Aorta (tissue), 5 donors: ENCODE measurements at regions of chr16 and their contacts with region 1.

Region 1: GRCh38 chr16:31458844-31459721 is at the start of gene ARMC5:
- DNase-seq: peak; percentile 99
- ATAC-seq: peak; percentile 94
- H3K4me3 ChIP-seq: peak within 1 kb of the TSS; percentile 51 to 52
- H3K27ac ChIP-seq: peak within 1 kb of the TSS; percentile 23 to 95
- H3K4me1 ChIP-seq: no peaks in the 10 kb centered on the region
- H3K27me3 ChIP-seq: no peaks in the 10 kb centered on the region
- total RNA-seq, gene ARMC5: 7.9 to 9.7 TPM

Region 2: DNA sequence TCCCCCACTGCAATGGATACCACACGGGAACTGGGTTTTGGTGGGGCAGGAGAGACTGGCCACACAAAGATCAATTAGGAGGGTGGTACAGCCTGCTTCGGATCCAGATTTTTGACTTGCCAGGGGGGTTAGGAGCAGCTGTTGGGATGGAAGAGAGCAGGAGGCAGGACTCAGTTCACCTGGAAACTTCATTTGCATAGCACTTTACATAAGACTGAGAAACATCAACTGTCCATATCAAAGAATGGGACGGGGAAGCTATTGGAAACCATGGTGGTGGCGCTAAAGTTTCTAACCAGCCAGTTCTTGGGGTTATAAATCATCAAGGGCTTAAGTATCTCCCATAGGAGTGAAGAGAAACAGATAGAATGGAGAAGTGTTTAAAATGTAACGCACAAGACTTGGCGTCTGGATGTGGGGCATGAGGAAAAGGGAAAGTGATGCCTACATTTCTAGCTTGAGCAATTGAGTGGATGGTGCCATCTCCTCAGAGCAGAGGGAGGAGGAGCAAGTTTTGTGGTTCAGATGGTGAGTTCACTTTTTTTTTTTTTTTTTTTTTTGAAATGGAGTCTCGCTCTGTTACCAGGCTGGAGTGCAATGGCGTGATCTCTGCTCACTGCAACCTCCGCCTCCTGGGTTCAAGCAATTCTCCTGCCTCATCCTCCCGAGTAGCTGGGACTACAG is 766.6 kb before region 1 on chr16:
- intact Hi-C with region 1: no loop called
- DNase-seq: no peak
- ATAC-seq: no peak
- H3K4me3 ChIP-seq: no peak overlapping the region
- H3K27ac ChIP-seq: no peak overlapping the region
- H3K4me1 ChIP-seq: no peaks in the 10 kb centered on the region
- H3K27me3 ChIP-seq: no peaks in the 10 kb centered on the region

Region 3: DNA sequence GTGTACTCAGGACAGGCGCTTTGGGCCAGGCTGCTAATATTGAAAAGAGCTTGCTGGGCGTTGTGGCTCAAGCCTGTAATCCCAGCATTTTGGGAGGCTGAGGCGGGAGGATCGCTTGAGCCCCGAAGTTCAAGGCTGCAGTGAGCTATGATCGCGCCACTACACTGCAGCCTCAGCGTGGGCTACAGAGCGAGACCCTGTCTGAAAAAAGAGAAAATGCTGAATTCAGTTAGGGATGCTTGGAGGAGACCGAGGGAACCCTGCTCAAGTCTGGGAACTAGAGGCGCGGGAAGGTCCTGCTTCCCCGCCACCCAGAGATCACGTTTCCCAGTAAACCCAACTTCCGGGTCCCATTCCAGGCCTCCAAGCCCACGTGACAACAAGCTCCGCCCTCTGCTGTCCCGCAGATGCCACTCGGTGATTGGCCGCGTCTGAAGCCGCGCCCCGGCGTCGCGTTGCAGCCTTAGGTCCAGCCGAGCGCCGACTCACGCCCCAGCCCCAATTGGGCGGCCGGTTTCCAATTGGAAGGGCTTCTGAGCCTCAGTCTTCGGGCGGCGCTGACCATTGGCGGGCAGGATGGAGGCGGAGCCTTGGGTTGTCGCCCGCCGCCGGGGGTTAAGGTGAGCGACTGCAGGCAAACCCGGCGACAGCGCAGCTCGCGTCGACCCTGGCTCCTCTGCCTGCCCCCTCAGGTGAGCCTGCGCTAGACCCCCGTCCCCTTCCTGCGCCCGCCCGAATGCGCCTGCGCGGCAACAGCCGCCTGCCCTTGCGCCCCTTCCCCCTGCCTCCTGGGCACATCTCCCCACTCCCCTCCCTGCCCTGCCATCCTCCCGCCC is 711.1 kb before region 1 on chr16 and contains the start of gene PHKG2:
- intact Hi-C with region 1: no loop called
- DNase-seq: peak; percentile 100
- ATAC-seq: peak; percentile 99
- H3K4me3 ChIP-seq: peak within 1 kb of the TSS; percentile 52 to 79
- H3K27ac ChIP-seq: peak within 1 kb of the TSS in 1 of 2 donors; percentile 84
- H3K4me1 ChIP-seq: no peaks in the 10 kb centered on the region
- H3K27me3 ChIP-seq: no peaks in the 10 kb centered on the region
- total RNA-seq, gene PHKG2: 15.8 to 20.8 TPM

Region 4: DNA sequence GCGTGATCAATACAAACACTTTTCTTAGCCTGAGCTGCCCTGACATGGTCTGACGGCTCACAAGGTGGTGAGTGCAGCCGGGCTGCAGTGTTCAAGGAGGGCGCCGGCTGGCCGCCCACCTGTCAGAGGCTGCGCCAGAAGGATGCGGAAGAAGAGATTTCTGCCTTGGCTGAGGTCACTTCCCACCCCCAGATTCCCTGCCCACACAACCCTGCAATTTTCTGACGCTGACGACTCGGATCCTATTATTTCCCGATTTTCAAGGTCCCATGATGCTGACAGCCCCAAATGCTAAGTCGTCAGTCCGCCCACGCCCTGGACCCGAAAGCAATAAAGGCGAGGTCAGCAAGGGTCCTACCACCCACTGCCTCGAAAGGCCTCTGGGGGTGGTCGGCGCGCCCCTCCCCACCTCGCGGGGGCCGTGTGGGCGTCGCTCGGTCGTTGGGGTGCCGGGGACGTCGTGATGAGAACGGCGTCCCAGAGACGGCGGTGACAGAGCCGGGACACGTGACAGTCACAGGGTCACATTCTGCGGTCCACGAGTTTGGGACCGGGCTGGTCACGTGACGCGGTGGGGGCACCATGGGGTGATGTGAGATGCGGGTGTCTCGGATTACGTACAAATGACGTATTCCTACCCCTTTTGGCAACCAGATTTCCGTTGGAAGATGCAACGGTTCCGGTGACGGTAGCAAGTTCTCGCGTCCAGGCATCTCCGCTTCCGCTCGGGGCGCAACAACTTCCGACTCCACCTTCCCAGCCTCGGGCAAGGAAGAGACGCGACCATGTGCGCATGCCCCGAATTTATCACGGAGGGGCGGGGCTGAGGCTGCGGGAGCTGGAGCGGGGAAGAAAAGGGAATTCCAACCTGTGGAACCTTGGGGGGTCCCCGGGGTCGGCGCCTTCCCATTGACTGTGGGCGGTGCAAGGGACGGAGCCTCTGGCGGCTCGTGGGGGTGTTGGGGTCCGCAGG is 426.1 kb before region 1 on chr16 and contains the start of gene STX4:
- intact Hi-C with region 1: loop called in 1 of 2 experiments (anchors 5 kb)
- DNase-seq: peak; percentile 99 to 100
- ATAC-seq: peak; percentile 96
- H3K4me3 ChIP-seq: peak within 1 kb of the TSS; percentile 76 to 89
- H3K27ac ChIP-seq: peak within 1 kb of the TSS; percentile 6 to 83
- H3K4me1 ChIP-seq: peaks cover 0 to 1% of the 10 kb centered on the region in 2 donors
- H3K27me3 ChIP-seq: no peaks in the 10 kb centered on the region
- total RNA-seq, gene STX4: 73.5 to 88.6 TPM

Region 5: GRCh38 chr16:31365131-31365865 is 93.8 kb before region 1 on chr16:
- intact Hi-C with region 1: no loop called
- DNase-seq: peak; percentile 3 to 14
- ATAC-seq: no peak
- H3K4me3 ChIP-seq: no peak overlapping the region
- H3K27ac ChIP-seq: no peak overlapping the region
- H3K4me1 ChIP-seq: no peaks in the 10 kb centered on the region
- H3K27me3 ChIP-seq: no peaks in the 10 kb centered on the region

Region 6: GRCh38 chr16:31496670-31497069 is 37.6 kb after region 1 on chr16:
- intact Hi-C with region 1: loop called in 1 of 2 experiments (anchors 5 kb)
- DNase-seq: peak in 1 of 2 donors; percentile 53
- ATAC-seq: no peak
- H3K4me3 ChIP-seq: no peak overlapping the region
- H3K27ac ChIP-seq: no peak overlapping the region
- H3K4me1 ChIP-seq: no peaks in the 10 kb centered on the region
- H3K27me3 ChIP-seq: no peaks in the 10 kb centered on the region

Region 7: DNA sequence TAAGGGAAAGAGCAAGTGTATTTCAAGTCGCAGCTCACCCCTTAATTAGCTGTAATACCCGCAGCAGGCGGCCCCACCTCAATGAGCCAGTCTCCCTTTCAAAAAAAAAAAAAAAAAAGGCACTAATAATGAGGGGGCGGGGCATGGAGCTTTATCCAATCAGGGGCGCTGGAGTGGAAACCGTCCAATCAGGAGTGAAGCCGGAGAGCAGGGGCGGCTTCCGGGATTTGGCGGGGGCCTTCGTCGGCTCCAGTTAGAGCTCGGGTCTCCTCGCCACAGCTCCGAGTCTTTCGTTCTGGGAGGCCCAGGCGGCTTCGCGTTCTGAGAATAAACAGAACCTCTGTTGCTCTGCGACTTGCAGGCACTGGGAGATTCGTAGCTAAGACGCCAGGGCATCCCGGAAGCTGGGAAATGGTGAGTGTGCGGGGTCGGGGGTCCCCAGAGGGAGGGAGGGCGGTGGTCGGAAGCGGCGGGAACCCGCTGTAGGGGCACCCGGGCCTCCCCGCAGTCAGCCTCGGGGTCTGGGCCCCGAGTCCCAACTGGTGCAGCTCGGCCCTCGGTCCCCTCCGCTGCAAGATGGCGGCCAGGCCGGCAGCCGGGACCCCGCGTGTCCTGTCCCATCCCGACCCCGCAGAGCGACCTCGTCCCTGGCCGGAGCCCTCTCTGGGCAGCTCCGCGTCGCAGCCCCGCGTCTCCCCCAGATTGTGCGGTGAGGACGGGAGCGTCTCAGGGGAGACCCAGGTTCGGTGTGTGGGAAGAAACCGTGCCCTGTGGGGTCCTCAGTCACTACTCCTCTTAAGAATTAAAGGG is 414.7 kb after region 1 on chr16 and contains the start of gene ZNF267:
- intact Hi-C with region 1: loop called (anchors 10 kb)
- DNase-seq: peak; percentile 96 to 97
- ATAC-seq: peak; percentile 96
- H3K4me3 ChIP-seq: peak within 1 kb of the TSS; percentile 94 to 99
- H3K27ac ChIP-seq: peak within 1 kb of the TSS; percentile 23 to 90
- H3K4me1 ChIP-seq: no peaks in the 10 kb centered on the region
- H3K27me3 ChIP-seq: no peaks in the 10 kb centered on the region
- total RNA-seq, gene ZNF267: 17.4 to 17.7 TPM